Head of caudate nucleus (tissue), 42 donors: ENCODE measurements at regions of chr12 and their contacts with region 1.

Region 1: GRCh38 chr12:15276088-15276698 is 46.1 kb upstream of the PTPRO start:
- DNase-seq: peak in 26 of 42 donors; percentile 12 to 81 (median 46)

Region 2: DNA sequence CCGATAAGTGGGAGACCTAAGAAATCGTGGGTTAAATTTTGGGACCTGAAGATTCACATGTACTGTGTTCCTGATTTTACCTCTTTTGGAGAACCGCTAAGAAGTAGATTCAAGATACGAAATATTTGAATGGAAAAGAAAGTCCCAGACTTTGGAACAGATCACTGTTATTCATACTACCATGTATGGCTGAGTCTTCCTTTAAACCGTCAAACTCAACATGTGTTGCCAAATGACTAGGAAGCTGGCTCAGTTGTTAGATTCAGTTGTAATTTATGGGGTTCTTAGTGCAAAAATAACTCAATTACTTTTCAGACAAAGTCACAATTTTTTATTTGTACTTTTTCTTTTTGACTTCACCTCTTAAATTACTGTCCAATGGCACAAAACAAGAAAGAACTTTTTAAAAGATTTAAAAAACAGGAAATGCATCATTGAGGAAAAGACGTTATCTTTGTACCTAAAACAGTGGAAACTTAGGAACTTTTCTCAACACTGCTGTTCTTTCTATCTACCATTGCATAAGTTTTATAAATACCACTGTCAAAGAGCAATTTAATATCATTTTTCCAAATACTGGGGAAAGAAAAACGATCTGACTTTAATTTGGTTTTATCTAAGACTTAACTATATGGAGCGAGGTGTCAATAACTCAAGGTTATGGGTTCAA is 70.7 kb before region 1 on chr12:
- intact Hi-C with region 1: no loop called
- DNase-seq: no peak

Region 3: DNA sequence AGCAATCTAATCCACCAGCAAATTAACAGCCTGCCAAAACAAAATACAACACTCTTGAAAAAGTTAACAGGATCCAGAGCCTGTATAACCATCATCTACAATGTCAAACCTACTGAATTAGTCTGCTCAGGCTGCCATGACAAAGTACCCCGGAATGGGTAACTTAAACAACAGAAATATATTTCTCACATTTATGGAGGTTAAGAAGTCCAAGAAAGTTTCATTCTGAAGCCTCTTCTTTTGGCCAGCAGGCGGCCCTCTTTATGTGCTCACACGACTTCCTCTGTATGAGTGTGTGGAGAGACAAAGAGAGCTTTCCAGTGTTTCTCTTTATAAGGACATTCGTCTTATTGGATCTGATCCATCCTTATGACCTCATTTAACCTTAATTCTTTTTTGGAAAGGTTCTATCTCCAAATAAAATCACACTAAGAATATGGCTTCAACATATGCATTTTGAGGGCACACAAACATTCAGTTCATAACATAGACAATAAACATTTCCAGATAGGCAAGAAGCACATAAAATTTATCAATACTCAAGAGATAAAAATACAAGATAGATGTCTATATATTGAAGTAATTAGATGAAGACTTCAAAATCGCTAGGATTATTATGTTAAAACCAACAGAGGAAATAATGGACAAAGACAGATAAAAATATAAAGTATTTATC is 49.1 kb before region 1 on chr12:
- intact Hi-C with region 1: no loop called
- DNase-seq: peak in 15 of 42 donors; percentile 10 to 60 (median 24)

Region 4: GRCh38 chr12:15336768-15337553 is 60.8 kb after region 1 on chr12:
- intact Hi-C with region 1: no loop called
- DNase-seq: no peak

Region 5: DNA sequence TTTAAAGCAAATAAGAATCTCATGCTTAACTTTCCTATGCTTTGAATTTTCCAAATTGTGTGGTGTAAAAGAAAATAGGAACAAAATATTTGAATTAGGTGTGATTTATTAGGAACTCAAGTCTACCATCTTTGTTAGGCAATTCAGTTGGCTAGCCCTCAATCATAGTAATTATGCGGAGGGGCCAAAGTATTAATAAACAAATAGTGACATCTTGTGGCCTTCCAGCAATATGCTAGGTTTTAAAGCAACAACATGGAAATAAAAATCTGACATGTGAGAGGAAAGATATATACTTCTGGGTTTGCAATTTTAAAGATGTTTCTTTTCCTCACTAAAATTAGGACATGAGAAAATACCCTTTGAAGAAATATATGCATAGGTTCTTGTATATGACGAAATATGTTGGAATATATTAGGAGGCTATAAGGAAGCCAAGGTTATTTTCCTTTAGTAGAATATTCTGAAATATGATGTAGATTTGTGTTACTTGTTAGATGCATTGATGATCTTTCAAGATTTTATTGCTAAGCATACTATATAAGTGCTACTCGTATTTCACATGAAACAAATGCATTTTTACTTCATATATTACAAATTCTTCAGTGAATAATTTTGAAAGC is 246.5 kb after region 1 on chr12:
- intact Hi-C with region 1: loop called (anchors 5 kb)
- DNase-seq: peak in 2 of 42 donors; percentile 15 to 46

Region 6: DNA sequence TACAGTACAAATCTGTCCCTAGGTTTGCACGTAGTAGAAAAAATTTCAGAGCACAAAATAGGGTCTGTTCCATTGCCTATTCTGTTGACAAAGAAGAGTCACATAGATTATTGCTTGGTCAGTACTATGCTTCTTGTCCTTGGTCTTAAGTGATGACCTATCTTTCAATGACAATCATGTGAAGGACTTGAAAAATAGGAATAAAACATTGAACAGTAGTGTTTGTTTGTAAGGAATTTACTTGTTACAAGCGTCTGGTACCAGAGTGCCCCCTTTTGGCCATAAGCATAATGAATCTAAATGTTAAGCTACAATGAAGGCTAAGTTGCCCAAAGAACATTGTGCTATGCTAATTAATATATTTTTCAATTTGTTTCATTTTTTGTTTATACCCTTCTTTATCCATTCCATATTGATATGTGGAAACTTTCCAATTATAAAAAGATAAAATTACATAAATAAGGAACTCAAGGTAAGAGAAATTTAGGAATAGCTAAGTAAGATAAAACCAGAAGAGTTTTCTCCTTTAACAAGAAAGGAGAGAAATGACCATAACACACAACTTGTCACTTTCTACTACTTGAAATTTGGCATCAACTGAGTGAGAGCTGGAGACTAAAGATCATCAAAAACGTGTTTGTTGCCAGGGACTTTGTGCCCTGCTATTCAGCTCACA is 308.3 kb after region 1 on chr12:
- intact Hi-C with region 1: loop called (anchors 10 kb)
- DNase-seq: peak in 21 of 42 donors; percentile 13 to 76 (median 49)

Region 7: GRCh38 chr12:15856097-15856982 is 580.1 kb after region 1 on chr12:
- intact Hi-C with region 1: loop called (anchors 10 kb)
- DNase-seq: peak in 29 of 42 donors; percentile 21 to 87 (median 65)